ENCODE measurements at regions of chr9 and their contacts with region 1.

Region 1: GRCh38 chr9:19456996-19457692 is 48.3 kb downstream of the ACER2 start:
- DNase-seq: peak; percentile 70
- CTCF ChIP-seq: peak; percentile 87

Region 2: DNA sequence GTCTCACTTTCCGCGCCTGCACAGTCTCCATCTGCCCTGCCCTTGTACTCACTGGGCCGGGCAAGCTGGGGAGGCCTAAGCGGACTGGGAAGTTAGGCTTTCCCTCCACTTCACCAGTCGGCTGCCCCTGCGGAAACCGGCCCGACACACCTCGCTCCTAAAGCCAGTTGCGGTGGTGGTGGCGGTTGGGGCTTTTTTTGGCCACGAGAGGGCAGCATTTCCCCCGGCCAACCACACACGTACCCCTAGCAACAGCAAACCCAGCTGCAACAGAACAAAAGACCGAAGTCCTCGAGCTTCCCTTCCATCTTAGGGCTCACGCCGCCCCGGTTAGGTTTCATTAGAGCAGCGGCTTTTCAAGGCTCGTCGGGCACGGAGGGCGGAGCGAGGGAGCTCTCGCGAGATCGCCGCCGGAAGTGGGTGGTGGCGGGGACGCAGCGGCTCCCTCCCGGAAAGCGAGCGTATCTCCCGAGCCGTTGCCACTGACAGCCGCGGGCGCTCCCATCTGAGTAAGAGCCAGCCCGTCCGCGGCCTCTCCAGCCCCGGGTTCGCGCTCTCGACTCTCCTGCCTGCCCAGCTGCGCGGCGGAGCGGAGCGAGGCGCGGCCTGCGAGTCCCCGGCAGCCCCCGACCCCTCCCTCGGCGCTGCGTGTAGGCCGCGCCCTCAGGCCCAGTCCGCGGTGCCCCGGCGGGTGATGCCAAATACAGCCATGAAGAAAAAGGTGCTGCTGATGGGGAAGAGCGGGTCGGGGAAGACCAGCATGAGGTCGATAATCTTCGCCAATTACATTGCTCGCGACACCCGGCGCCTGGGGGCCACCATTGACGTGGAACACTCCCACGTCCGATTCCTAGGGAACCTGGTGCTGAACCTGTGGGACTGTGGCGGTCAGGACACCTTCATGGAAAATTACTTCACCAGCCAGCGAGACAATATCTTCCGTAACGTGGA is 407.9 kb before region 1 on chr9 and contains the start of gene RRAGA:
- CTCF ChIA-PET with region 1: interaction called, 12 read pairs
- POLR2A ChIA-PET with region 1: interaction called, 4 read pairs
- DNase-seq: peak; percentile 96
- CTCF ChIP-seq: peak; percentile 76

Region 3: DNA sequence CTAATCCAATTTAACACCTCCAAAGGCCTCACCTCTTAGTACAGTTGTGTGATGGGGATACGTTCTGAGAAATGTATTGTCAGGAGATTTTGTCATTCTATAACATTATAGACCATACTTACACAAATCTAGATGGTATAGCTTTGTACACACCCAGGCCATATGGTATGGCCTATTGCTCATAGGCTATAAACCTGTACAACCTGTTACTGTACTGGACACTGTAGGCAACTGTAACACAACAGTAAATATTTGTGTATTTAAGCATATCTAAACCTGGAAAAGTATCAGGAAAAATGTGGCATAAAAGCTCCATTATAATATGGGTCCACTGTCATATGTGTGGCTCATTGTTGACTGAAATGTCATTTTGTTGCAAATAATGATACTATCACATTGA is 36.3 kb before region 1 on chr9:
- CTCF ChIA-PET with region 1: interaction called, 11 read pairs
- POLR2A ChIA-PET with region 1: no interaction called
- DNase-seq: no peak
- CTCF ChIP-seq: no peak

Region 4: DNA sequence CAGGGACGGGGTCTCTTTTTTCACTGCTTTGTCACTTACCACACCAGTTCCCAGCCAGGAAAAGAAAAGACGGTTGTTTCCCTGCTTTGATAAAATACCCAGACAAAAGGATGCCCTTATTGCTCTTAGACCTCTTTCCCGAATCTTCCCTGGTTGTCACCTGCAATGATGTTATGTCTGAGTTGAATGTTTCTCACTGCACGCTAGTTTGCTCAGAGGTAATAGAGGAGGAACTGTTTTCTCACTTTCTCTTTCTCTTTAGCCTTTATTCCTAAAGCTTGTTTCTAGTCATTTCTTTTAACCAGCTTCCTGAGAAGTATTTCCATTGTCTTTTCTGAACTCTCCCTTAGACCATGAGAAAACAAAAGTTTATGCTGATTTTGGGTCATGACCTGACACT is 15.4 kb before region 1 on chr9:
- CTCF ChIA-PET with region 1: interaction called, 30 read pairs
- POLR2A ChIA-PET with region 1: no interaction called
- DNase-seq: peak; percentile 65
- CTCF ChIP-seq: no peak

Region 5: DNA sequence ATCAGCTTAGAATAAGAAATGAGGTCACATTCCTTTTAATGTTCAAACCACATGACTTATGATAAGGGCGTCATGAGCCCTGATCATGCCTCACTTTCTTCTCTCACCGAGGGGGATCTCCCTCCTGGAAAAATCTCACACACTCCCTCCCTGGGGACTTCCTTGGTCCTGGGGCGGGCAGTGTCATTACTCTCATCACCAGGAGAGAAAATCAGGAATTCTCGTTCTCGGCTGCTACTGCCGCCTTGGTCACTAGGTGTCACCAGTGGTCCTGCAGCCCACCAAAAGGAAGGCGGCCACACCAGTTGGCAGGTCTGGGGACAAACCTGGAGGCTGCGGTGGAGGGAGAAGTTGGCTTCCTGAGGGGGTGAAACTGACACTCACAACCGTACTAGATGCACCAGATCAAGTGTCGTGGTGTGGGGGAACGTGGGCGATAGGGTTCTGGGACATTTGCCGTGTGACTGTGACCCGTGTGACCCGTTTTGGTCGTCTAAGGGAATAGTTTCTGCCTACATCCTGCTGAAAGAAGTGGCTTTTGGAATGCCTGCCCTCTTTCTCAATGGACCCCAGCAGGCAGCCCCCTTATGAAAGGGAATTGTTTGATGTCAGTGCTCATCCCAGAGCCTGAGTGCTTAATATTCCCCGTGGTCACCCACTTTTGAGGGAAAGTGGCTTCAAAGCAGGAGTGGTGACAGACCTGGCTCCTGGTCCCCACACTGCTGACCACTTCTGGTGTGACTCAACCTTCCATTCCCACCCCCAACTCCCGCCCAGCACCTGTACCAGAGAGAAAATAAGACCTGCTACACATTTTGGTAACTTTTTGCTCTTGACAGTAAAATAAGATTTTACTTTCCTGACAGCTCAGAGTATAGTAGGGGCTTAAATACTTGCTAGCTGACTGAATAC is 14.8 kb after region 1 on chr9:
- CTCF ChIA-PET with region 1: interaction called, 102 read pairs
- POLR2A ChIA-PET with region 1: no interaction called
- DNase-seq: peak; percentile 70
- CTCF ChIP-seq: peak; percentile 79

Region 6: DNA sequence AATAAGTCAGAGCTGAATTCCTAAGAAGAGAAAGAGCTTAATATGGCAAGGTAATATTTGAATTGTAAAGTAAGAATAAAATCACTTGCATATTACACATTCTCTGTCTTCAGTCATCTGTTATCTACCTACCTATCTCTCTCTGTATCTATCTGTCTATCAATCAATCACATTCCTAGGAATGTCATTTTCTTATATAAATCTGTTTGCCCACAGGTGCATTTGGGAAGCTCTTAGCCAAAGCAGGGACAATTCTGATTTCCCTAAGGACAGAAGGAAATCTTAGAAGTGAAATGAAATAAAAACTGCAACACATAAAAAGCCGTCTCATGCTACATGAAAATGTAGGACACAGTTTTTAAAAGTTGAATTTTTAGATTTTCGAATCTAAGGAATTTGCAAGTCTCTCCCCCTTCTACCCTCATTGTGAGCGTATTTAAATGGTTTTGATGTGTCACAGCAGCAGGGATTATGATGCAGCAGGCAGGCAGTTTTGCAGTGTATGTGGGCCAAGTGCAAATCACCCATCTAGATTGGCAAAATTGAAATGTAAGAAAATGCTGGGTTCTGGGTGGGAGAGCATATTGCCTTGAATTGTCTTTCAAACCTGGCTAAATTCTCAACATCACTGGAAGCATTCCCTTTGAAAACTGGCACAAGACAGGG is 107.4 kb after region 1 on chr9:
- CTCF ChIA-PET with region 1: no interaction called
- POLR2A ChIA-PET with region 1: no interaction called
- DNase-seq: no peak
- CTCF ChIP-seq: no peak

Region 7: DNA sequence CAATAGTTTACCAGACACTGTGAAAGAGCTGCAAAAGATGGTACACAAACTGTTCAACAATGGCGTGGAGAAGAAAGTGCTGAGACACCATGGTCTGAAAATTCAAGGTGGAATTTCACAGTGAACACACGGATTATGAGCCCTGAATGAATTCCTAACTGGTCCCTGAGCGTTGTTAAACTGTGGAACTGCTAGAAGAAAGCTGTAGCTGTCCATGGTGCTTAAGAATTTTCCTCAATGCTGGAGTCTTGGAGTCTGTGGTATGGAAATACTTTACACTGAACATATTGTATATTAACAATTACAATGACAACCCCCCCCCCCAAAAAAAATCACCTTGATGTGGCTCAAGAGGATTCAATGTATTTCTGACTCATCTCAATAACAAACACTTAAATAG is 263.2 kb after region 1 on chr9:
- CTCF ChIA-PET with region 1: no interaction called
- POLR2A ChIA-PET with region 1: no interaction called
- DNase-seq: no peak
- CTCF ChIP-seq: no peak